CD8-positive, alpha-beta T cell (primary cell): ENCODE measurements at regions of chr9 and their contacts with region 1.

Region 1: DNA sequence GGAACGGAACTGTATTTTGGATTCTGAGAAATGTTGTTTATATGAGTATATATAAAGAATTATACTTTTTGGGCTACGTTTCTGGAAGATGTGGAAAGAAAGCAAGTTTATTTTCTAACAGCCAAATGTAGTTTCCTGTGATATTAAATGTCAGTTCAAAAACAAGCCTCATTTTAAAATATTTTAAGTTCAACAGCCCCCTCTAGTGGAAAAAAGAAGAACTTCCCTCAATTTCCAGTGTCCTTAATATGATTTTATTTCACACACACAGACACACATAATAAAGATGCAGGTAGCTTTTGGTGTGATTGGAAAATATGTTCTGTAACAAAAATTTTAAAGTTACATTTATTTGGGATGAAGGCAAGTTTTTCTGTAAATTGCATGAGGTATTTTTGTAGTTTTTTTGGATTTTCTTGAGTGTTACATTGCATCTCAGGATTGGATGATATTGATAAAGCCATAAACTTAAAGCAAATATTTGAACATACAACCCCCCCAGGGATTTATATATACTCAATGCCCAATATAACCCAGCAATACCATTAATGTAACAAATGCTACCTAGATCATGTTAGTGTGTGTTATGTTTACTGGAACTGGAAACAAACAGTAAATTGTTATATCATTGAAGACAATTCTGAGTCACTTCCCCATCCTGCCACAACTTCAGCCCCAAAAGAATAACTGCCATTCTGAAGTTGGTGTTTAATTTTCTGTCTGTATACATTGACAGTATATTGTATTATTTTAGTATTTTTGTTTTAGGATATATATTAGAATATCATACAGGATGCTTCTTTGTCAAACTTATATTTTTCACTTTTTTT is 54.0 kb downstream of the CCDC171 start:
- DNase-seq: peak in 3 of 9 experiments; percentile 18 to 62 (median 52)
- ATAC-seq: no peak
- H3K4me3 ChIP-seq: no peak overlapping the region
- H3K4me3 Mint-ChIP-seq: no peak overlapping the region
- H3K27ac ChIP-seq: no peak overlapping the region
- H3K27ac Mint-ChIP-seq: no peak overlapping the region
- H3K4me1 ChIP-seq: no peaks in the 10 kb centered on the region
- H3K4me1 Mint-ChIP-seq: peaks cover 2% of the 10 kb centered on the region
- H3K27me3 ChIP-seq: no peaks in the 10 kb centered on the region
- H3K27me3 Mint-ChIP-seq: no peaks in the 10 kb centered on the region
- CTCF ChIP-seq: peak; percentile 89

Region 2: GRCh38 chr9:15104826-15105420 is 501.9 kb before region 1 on chr9:
- CTCF ChIA-PET with region 1: interaction called, 3 read pairs
- POLR2A ChIA-PET with region 1: no interaction called
- intact Hi-C with region 1: loop called in 1 of 2 experiments (anchors 10 kb)
- DNase-seq: peak in 8 of 9 experiments; percentile 3 to 56 (median 36)
- ATAC-seq: peak; percentile 59
- H3K4me3 ChIP-seq: no peak overlapping the region
- H3K4me3 Mint-ChIP-seq: no peak overlapping the region
- H3K27ac ChIP-seq: no peak overlapping the region
- H3K27ac Mint-ChIP-seq: no peak overlapping the region
- H3K4me1 ChIP-seq: no peaks in the 10 kb centered on the region
- H3K4me1 Mint-ChIP-seq: no peaks in the 10 kb centered on the region
- H3K27me3 ChIP-seq: no peaks in the 10 kb centered on the region
- H3K27me3 Mint-ChIP-seq: peaks cover 9% of the 10 kb centered on the region
- CTCF ChIP-seq: peak; percentile 69

Region 3: GRCh38 chr9:15277400-15278090 is 329.3 kb before region 1 on chr9:
- CTCF ChIA-PET with region 1: interaction called, 9 read pairs
- POLR2A ChIA-PET with region 1: no interaction called
- intact Hi-C with region 1: loop called (anchors 1 to 2 kb)
- DNase-seq: peak in 2 of 9 experiments; percentile 49 to 59
- ATAC-seq: no peak
- H3K4me3 ChIP-seq: no peak overlapping the region
- H3K4me3 Mint-ChIP-seq: no peak overlapping the region
- H3K27ac ChIP-seq: no peak overlapping the region
- H3K27ac Mint-ChIP-seq: no peak overlapping the region
- H3K4me1 ChIP-seq: no peaks in the 10 kb centered on the region
- H3K4me1 Mint-ChIP-seq: peaks cover 52% of the 10 kb centered on the region
- H3K27me3 ChIP-seq: no peaks in the 10 kb centered on the region
- H3K27me3 Mint-ChIP-seq: no peaks in the 10 kb centered on the region
- CTCF ChIP-seq: peak; percentile 56

Region 4: GRCh38 chr9:15422372-15423230 is 184.3 kb before region 1 on chr9 and contains the start of gene SNAPC3:
- CTCF ChIA-PET with region 1: interaction called, 6 read pairs
- POLR2A ChIA-PET with region 1: interaction called, 3 read pairs
- intact Hi-C with region 1: loop called in 1 of 2 experiments (anchors 5 kb)
- DNase-seq: peak; percentile 85 to 96 (median 92)
- ATAC-seq: peak; percentile 95
- H3K4me3 ChIP-seq: peak within 1 kb of the TSS; percentile 65 to 83
- H3K4me3 Mint-ChIP-seq: peak within 1 kb of the TSS; percentile 91
- H3K27ac ChIP-seq: peak within 1 kb of the TSS; percentile 64 to 67
- H3K27ac Mint-ChIP-seq: peak within 1 kb of the TSS; percentile 87
- H3K4me1 ChIP-seq: peaks cover 22% of the 10 kb centered on the region
- H3K4me1 Mint-ChIP-seq: peaks cover 38% of the 10 kb centered on the region
- H3K27me3 ChIP-seq: no peaks in the 10 kb centered on the region
- H3K27me3 Mint-ChIP-seq: no peaks in the 10 kb centered on the region
- CTCF ChIP-seq: no peak
- total RNA-seq, gene SNAPC3: 3.4 to 5.0 TPM

Region 5: DNA sequence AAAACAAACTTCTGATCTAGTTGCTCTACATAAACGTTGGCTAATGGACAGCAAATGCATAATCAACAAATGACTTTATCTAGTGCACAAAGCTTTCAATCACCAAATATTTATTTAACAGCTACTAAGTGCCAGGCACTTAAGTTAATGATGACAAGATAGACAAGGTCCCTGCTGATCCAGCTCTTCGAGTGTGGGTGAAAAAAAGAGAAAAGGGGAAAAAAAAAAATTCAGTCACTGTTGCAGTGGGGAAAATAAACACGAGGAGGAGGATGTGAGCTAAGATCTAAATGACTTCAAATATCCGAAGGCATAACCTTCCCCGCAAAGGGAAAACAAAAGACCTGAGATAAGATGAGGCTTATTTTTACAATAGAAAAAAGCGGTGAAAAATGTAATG is 105.7 kb before region 1 on chr9:
- CTCF ChIA-PET with region 1: no interaction called
- POLR2A ChIA-PET with region 1: no interaction called
- intact Hi-C with region 1: loop called in 1 of 2 experiments (anchors 1 kb)
- DNase-seq: peak in 2 of 9 experiments; percentile 17 to 36
- ATAC-seq: no peak
- H3K4me3 ChIP-seq: no peak overlapping the region
- H3K4me3 Mint-ChIP-seq: no peak overlapping the region
- H3K27ac ChIP-seq: no peak overlapping the region
- H3K27ac Mint-ChIP-seq: peak overlapping the region; percentile 24
- H3K4me1 ChIP-seq: peaks cover 42% of the 10 kb centered on the region
- H3K4me1 Mint-ChIP-seq: peaks cover 70% of the 10 kb centered on the region
- H3K27me3 ChIP-seq: no peaks in the 10 kb centered on the region
- H3K27me3 Mint-ChIP-seq: no peaks in the 10 kb centered on the region
- CTCF ChIP-seq: no peak

Region 6: DNA sequence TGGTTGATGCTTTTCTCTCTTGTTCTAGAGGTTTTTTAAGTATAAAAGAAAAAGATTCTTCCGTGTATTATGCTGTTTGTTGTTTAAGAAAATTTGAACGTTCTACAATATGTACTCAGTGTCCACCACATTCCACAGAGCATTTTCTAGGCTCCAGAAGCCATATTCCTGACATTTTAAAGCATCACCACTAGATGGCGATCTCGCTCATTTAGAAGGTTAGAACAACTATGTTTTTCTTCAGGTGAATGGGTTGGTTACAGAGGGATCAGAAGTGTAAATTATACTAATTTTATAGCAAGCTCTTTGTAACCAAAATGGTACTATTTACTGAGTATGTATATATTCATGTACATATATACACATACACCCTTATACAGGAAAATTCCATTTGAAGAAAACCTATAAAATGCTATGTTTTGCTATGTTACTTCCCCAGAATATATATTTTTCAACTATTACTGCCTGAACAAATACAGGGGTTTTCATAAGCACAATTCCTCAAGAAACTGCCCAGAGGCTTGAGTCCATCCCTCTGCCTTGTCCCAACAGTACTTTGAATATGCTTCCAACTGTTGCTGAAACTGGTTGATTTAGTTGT is 230.3 kb after region 1 on chr9:
- CTCF ChIA-PET with region 1: no interaction called
- POLR2A ChIA-PET with region 1: no interaction called
- intact Hi-C with region 1: no loop called
- DNase-seq: peak in 3 of 9 experiments; percentile 11 to 56 (median 45)
- ATAC-seq: no peak
- H3K4me3 ChIP-seq: no peak overlapping the region
- H3K4me3 Mint-ChIP-seq: no peak overlapping the region
- H3K27ac ChIP-seq: no peak overlapping the region
- H3K27ac Mint-ChIP-seq: no peak overlapping the region
- H3K4me1 ChIP-seq: no peaks in the 10 kb centered on the region
- H3K4me1 Mint-ChIP-seq: no peaks in the 10 kb centered on the region
- H3K27me3 ChIP-seq: no peaks in the 10 kb centered on the region
- H3K27me3 Mint-ChIP-seq: no peaks in the 10 kb centered on the region
- CTCF ChIP-seq: peak; percentile 87

Region 7: DNA sequence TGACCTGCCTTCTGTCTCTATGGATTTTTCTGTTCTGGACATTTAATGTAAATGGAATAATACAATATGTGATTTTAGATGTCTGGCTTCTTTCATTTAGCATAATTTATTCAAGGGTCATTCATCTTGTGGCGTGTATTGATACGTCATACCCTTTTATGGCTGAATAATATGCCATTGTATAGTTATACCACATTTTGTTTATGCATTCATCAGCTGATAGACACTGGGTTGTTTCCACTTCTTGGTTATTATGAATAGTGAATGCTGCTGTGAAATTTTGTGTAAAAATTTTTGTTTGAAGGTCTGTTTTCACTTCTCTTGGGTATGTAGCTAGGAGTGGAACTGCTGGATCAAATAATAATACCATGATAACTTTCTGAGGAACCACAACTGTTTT is 244.9 kb after region 1 on chr9:
- CTCF ChIA-PET with region 1: no interaction called
- POLR2A ChIA-PET with region 1: no interaction called
- intact Hi-C with region 1: no loop called
- DNase-seq: no peak
- ATAC-seq: no peak
- H3K4me3 ChIP-seq: no peak overlapping the region
- H3K4me3 Mint-ChIP-seq: no peak overlapping the region
- H3K27ac ChIP-seq: no peak overlapping the region
- H3K27ac Mint-ChIP-seq: no peak overlapping the region
- H3K4me1 ChIP-seq: no peaks in the 10 kb centered on the region
- H3K4me1 Mint-ChIP-seq: no peaks in the 10 kb centered on the region
- H3K27me3 ChIP-seq: no peaks in the 10 kb centered on the region
- H3K27me3 Mint-ChIP-seq: no peaks in the 10 kb centered on the region
- CTCF ChIP-seq: no peak